ENCODE measurements at regions of chr15 and their contacts with region 1.

Region 1: DNA sequence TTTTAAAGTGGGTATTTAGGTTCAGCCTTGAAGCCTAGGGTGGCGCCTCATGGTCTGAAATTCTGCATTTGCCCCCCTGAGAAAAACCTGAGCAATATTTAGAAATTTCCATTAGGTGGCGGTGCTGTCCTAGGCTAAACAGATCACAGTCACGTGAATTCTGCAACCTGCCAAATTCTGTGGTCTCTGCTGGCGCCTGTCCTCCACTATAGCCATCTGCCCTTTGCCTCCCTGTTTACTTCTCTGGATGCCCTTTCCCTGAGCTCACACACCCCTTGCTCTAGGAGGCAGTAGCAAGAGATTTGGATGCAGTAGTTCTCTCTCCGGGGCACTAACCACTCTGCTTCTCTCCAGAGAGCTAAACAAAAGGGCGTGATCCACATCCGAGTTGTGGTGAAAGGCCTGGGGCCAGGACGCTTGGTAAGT is 9.1 kb downstream of the MRPS11 start:
- DNase-seq: peak; percentile 49
- H3K4me3 ChIP-seq: no peak overlapping the region
- H3K27ac ChIP-seq: no peak overlapping the region
- H3K4me1 ChIP-seq: no peaks in the 10 kb centered on the region
- H3K27me3 ChIP-seq: no peaks in the 10 kb centered on the region
- CTCF ChIP-seq: peak; percentile 60

Region 2: DNA sequence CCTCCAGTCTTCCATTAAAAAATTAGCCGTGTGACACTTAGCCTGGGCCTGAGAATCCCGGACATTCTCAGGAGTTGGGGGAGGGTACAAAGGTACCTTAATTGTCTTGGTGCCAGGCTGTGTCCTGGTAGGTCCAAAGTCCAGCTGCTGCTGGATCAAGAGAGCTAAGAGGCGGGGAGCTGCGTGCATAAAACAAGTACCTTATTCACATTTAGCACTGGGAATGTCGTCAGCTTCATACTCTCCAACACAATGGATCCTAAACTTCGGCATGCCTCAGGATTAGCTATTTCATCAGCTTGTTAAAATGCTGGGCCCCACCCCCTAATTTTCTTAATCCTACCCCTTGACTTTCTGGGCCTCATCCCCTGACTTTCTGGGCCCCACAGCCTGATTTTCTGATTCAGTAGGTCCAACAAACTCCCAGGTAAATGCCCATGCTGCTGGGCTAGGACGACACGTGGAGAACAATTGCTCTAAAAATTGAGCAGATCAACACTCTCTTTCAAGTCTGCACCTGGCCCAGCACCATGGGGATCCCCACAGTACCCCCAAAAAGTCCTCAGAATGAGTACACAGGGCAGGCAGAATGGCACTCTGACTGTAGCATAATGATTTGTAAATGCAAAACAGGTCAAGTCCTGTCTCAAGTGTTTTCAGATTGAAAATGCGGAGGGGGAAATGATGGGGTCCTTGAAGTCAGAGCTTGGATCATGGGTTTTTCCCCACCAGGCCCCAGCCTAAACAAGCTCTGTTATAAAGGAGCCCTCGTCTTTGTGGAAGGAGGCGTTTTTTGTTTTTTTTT is 138.9 kb after region 1 on chr15:
- CTCF ChIA-PET with region 1: no interaction called
- POLR2A ChIA-PET with region 1: no interaction called
- intact Hi-C with region 1: loop called (anchors 2 kb)
- DNase-seq: no peak
- H3K4me3 ChIP-seq: no peak overlapping the region
- H3K27ac ChIP-seq: no peak overlapping the region
- H3K4me1 ChIP-seq: peaks cover 4% of the 10 kb centered on the region
- H3K27me3 ChIP-seq: no peaks in the 10 kb centered on the region
- CTCF ChIP-seq: no peak

Measured in A673 (cell line).